HEK293 (cell line): ENCODE measurements at regions of chr2 and their contacts with region 1.

Region 1: DNA sequence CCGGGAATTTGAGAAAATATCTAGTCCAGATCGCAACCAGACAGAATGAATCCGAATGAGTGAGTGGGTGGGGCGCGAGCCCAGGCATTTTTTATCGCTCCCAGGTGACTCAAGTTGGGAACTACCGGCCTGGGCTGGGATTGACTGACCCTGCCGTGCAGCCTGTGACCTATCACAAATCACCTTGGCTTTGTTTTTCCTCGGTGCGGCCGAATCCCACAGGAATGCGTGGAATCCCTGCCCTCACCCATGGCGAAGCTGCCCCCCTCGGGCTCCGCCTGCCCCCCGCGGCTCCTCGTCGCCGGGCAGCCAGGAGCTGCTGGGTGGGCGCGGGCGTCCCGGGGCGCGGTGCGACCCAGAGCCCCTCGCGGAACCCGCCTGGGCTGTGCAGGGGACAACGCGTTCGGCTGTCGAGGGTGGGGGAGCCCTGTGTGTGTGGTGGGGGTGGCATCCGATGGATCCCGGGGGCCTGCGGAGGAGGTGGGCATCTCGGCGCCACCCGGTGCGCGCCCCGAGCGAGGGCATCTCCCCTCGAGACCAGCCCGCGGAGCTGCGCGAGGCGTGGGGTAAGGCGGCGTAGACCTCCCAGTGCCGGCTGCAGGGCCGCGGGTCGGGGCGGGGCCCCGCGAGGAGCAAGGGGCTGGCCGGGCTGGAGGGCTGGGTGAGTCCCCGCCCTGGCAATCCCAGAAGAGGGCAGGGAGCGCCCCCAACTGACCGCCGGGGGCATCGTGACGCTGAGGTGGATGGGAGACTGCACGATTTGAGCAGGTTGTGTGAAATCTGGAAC is 16.5 kb downstream of the B3GNT7 start:
- H3K4me3 ChIP-seq: peak overlapping the region; percentile 67
- H3K27ac ChIP-seq: no peak overlapping the region; the same call in 1 of the 2 replicates
- H3K4me1 ChIP-seq: no peaks in the 10 kb centered on the region
- CTCF ChIP-seq: peak; percentile 95

Region 2: GRCh38 chr2:230942920-230943896 is 468.8 kb before region 1 on chr2:
- CTCF ChIA-PET with region 1: no interaction called
- POLR2A ChIA-PET with region 1: no interaction called
- H3K4me3 ChIP-seq: no peak overlapping the region
- H3K27ac ChIP-seq: no peak overlapping the region
- H3K4me1 ChIP-seq: no peaks in the 10 kb centered on the region
- CTCF ChIP-seq: no peak

Region 3: DNA sequence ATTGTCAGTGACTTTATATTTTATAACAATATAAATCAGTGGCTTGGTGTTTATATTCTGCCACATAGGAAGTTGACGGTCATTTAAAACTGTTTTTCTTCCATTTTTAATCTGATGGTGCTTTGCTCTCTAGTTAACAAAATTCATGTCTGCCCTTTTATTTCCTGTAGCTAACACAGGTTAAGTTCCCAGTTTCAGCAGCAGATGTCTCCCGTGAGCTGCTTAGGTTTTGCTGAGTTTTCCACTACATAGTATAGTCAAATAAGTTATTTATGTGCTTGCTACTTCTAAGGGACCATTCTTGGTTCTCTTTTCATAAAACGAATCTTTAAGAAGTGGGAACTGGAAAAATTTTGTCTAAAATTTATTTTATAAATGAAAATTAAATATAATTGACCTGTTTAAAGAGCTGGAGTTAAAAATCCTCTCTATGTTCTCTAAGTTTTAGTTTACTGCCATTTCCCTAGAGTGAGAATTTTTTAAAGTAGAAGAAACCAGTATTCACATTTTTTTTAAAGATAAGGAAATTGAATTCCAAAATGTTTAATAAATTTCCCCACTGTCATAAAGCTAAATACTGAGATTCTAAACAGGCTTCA is 307.8 kb before region 1 on chr2:
- CTCF ChIA-PET with region 1: interaction called, 47 read pairs
- POLR2A ChIA-PET with region 1: no interaction called
- H3K4me3 ChIP-seq: no peak overlapping the region
- H3K27ac ChIP-seq: no peak overlapping the region
- H3K4me1 ChIP-seq: no peaks in the 10 kb centered on the region
- CTCF ChIP-seq: no peak

Region 4: DNA sequence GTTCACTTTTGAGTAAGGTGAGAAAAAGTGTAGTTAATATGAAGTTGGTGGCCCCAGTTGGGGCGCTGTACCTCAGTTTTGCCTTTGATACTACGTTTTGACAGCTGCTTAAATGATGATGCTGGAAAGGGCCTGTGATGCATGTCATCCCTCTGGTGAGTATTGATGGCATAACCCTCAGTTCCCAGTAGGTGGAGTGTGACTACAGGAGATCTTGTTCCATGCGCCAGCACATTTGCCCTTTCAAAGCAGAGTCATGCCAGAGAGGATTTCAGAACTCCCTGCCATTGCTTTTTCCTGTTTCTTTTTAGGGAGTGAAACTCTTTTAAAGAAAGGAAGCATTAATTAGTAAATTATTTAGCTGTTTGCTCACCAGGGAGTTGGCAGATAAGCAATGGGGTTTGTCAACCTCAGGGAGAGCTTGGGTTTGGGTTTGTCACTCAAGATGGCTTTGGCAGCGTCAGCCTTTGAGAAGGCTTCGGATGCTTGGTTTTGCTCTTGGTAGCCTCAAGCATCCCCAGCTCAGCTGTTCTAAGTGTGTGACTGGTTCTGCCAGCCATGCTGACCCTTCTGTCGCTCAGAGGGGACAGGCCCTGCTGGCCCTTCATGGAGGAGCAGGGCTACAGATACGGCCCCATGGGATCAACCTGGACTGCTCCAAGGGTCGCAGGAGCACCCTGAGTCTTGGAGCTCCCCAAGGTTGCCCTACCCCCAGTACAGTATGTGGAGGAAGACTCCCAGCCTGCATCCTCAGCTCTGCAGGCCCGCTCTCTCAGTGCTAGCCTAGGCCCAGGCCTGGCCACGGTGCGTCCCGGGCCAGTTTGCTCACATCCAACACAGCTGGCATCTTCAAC is 184.5 kb before region 1 on chr2:
- CTCF ChIA-PET with region 1: interaction called, 48 read pairs
- POLR2A ChIA-PET with region 1: no interaction called
- H3K4me3 ChIP-seq: no peak overlapping the region
- H3K27ac ChIP-seq: no peak overlapping the region
- H3K4me1 ChIP-seq: peaks cover 6% of the 10 kb centered on the region; the same call in 1 of the 2 replicates
- CTCF ChIP-seq: peak; percentile 70

Region 5: GRCh38 chr2:231250161-231250560 is 161.9 kb before region 1 on chr2:
- CTCF ChIA-PET with region 1: no interaction called
- POLR2A ChIA-PET with region 1: no interaction called
- H3K4me3 ChIP-seq: no peak overlapping the region
- H3K27ac ChIP-seq: no peak overlapping the region
- H3K4me1 ChIP-seq: peaks cover 7% of the 10 kb centered on the region
- CTCF ChIP-seq: no peak

Region 6: DNA sequence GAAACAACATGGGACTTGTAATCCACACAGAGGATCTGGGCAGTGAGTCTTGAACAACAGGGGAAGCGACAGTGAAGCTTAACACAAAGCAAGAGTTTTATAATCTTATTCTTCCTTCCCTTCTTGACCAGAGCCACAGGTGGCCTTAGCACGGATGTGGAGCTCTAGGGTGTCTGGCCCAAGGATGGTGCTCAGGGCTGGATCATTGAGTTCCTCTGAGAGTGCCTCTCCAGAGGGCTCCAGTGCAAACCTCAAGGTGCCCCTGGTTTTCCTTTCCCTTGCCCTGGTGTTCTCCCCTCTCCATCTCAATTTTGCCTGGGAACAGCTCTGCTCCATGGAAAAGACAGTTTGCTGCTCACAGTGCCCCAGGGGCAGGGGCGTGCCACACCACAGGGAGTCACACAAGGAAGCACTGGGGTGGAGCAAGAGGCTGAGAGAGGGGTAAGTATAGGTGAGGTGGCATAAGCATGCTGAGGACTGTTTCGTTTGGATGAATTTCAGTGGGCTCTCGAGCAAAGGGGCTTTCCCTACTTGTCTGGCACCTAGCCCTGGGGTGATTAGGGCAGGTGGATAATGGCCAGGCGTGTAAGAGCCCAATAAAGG is 105.1 kb before region 1 on chr2:
- CTCF ChIA-PET with region 1: interaction called, 13 read pairs
- POLR2A ChIA-PET with region 1: no interaction called
- H3K4me3 ChIP-seq: no peak overlapping the region
- H3K27ac ChIP-seq: no peak overlapping the region
- H3K4me1 ChIP-seq: peaks cover 6% of the 10 kb centered on the region; the same call in 1 of the 2 replicates
- CTCF ChIP-seq: no peak

Region 7: DNA sequence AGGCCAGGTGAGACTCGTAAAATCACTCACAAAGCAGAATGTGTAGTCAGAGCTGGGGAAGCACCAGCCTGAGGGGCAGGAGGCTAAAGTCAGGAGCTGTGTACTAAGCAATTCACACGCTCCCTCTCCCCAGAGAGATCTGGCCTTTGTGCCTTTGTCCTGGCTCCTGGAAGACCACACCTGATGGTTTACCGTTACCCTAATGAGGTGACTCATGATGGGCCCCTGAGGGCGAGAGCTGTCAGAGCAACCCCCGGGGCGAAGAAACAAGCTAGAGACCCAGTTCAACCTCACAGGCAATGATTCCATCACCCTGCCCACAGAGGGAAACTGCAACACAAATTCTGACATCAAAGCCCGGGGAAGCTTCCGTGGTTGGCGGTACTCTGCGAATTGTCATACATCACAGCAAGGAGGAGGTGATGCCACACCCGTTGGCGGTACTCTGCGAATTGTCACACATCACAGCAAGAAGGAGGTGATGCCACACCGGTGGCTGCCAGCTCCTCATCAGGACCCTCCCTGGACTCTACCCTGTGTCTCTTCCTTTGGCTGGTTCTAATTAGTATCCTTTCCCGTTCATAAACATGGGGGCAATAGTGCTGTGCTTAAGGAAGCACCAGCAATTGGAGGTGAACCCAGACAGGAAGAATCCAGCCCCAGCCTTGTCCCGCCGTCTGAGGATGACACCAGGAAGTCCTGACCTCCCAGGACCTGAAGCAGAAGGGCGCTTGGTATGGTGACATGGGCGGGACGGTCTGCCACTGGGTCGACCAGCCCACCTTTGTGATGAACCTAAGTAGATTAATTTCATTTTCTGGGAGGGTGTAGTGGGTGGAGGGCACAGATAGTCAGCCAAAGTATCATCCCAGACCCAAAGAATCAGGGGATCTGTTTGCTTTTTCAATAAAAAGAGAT is 14.0 kb after region 1 on chr2:
- CTCF ChIA-PET with region 1: interaction called, 15 read pairs
- POLR2A ChIA-PET with region 1: no interaction called
- H3K4me3 ChIP-seq: no peak overlapping the region
- H3K27ac ChIP-seq: no peak overlapping the region
- H3K4me1 ChIP-seq: no peaks in the 10 kb centered on the region
- CTCF ChIP-seq: no peak

Region 8: GRCh38 chr2:231581328-231581727 is 169.3 kb after region 1 on chr2:
- CTCF ChIA-PET with region 1: no interaction called
- POLR2A ChIA-PET with region 1: no interaction called
- H3K4me3 ChIP-seq: no peak overlapping the region
- H3K27ac ChIP-seq: no peak overlapping the region
- H3K4me1 ChIP-seq: no peaks in the 10 kb centered on the region
- CTCF ChIP-seq: no peak

Region 9: DNA sequence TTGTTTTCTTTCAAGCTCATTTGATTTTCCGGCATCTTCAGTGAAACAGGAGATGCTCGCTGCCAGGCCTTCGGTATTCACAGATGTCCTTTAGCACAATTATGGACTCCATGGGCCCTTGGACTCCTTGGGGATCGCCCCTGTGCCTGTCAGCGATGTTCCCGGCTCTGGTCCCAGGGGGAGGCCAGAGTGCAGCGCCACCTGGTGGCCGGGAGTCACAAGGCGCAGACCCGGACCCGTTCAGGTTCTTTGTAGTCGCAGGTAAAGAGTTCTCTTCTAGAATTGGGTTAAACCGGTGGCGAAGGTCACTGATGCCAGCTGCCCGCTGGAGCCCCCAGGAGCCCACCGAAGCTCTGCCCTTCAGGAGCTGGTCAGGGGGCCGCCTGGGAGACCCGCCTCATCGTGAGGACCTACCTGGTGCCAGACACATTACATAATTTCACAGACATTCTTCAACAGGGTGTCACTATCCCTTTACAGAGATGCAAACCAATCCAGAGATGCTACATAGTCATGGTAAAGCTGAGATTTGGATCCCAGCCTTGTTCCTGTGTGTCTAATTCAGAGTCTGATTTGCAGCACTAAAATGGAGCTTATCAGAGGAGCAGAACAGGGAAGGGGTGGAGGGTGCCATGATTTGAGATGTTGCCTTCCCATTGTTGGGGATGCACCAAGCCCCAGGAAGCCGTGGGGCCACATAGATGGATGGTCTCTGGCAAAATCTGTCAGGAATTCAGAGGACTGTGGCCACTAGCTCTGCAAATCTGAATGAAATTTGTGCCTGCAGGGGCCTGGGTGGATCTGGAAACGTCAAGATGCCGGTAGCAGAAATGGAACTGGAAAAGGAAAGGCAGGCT is 1642.1 kb after region 1 on chr2:
- CTCF ChIA-PET with region 1: no interaction called
- POLR2A ChIA-PET with region 1: no interaction called
- H3K4me3 ChIP-seq: no peak overlapping the region
- H3K27ac ChIP-seq: no peak overlapping the region
- H3K4me1 ChIP-seq: no peaks in the 10 kb centered on the region
- CTCF ChIP-seq: peak; percentile 69